ENCODE measurements at regions of chr1 and their contacts with region 1.

Region 1: DNA sequence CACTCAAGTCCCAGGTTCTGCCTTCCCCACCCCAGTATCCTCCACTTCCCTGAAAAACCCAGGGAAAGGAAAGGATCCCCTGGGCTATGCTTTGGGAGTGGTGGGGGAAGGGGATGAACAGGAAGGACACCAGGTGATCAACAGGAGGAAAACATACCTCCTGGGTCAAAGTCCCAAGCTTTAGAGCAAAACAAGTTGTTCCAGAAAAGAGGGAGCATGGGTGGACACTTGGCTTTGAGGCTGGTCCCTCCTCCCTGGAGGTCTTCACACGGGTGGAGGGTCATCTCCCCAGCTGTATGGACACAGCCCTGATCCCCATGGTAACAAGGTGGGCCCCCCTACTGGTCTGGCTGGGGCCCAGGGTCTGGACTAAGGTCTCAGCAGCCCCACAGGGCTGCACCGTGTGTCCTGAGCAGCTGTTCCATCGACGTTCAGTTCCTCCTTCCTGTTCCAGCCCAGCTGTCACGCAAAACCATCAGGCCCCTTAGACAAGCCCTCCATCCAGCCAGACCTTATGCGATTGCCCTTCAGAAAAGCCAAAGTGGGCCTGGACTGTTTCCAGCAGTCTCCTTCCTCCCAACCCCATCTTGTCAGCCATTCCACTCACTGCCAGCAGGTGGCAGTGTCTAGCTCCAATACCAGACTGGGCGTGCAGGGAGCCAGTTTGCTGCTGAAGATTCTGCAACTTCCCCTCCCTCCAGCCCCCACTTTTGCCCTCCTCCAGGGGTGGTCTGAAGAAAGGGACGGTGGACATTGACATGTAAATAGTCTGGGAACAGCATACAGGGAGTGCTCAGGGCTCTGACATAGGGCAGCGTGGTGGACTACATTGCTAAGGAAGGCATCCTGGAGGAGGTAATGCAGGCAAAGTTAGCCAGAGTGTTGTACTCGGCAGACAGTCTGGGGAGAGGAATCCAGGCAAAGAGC is 2.9 kb upstream of the PDZK1IP1 start:
- DNase-seq: peak; percentile 85
- H3K4me3 ChIP-seq: no peak overlapping the region
- H3K27ac ChIP-seq: peak overlapping the region; percentile 73
- H3K4me1 ChIP-seq: peaks cover 23% of the 10 kb centered on the region
- H3K27me3 ChIP-seq: no peaks in the 10 kb centered on the region
- CTCF ChIP-seq: peak; percentile 97

Region 2: GRCh38 chr1:47333922-47334764 is 141.4 kb after region 1 on chr1:
- intact Hi-C with region 1: loop called (anchors 5 kb)
- DNase-seq: peak; percentile 89
- H3K4me3 ChIP-seq: peak overlapping the region; percentile 67
- H3K27ac ChIP-seq: peak overlapping the region; percentile 94
- H3K4me1 ChIP-seq: peaks cover 10% of the 10 kb centered on the region
- H3K27me3 ChIP-seq: no peaks in the 10 kb centered on the region
- CTCF ChIP-seq: no peak

Region 3: DNA sequence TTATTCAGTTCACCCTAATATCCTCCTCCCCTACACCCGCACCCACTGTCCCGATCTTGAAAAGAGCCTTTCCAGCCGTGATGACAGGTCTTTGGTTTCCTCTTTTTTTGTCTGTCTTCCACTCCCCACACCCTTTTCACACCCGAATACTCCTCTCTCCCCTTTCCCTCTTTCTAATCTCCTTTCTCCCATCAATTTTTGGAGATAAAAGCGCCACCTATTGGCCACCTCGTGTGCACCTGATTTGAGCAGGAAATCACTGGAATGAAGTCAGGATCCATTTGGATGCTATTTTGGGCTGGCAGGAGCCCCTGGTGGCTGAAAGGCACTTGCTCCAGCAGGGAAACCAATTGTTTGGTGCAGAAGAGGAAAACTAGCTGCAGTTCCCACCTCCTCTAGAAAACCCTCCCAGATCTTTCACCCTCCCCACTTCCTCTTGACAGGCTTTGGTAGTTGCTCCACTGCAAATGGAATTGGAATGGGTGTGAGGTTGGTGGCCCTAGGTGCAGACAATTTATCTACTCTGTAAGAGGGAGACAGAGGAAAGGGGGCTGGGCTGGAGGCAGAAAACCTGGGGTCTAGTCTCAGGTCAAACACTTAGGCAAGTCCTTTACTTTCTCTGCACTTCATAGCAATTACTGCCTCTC is 231.7 kb after region 1 on chr1:
- intact Hi-C with region 1: loop called (anchors 10 kb)
- DNase-seq: peak; percentile 42
- H3K4me3 ChIP-seq: no peak overlapping the region
- H3K27ac ChIP-seq: no peak overlapping the region
- H3K4me1 ChIP-seq: no peaks in the 10 kb centered on the region
- H3K27me3 ChIP-seq: no peaks in the 10 kb centered on the region
- CTCF ChIP-seq: peak; percentile 64

Region 4: GRCh38 chr1:47547753-47548573 is 355.2 kb after region 1 on chr1:
- intact Hi-C with region 1: no loop called
- DNase-seq: no peak
- H3K4me3 ChIP-seq: no peak overlapping the region
- H3K27ac ChIP-seq: no peak overlapping the region
- H3K4me1 ChIP-seq: no peaks in the 10 kb centered on the region
- H3K27me3 ChIP-seq: no peaks in the 10 kb centered on the region
- CTCF ChIP-seq: no peak

Region 5: DNA sequence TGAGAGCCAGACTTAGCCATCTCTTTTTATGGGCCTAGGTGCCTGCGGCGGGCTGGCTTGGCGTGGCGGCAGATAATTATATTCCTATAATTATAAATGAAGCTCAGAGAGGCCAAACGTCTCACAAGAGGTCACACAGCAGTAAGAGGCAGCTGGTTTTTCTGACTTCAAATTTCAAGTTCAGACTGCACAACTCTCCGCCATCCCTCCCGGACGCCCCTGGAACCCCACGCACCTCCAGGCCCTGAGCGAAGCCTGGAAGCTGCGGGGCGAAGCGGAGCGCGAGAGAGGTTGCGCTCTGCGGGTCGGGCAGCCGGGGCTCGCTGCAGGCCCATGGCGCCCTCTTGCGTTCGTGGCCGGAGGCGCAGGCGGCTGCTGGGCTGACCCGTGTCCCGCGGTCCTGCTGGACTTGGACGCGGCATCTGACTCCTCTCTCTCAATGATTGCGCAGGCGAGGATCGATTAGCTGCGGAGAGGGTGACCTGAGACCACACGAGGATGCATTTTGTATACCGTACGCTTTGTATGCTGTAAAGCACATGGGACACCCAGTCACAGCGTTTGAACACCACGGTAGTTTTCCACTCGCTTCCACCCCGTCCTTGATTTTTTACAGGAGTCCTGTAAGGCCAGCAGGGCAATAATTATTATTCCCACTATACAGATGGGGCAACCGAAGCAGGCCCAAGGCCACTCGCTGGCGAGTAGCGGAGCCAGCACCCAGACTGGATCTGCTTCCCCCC is 517.8 kb after region 1 on chr1:
- intact Hi-C with region 1: loop called (anchors 10 kb)
- DNase-seq: peak; percentile 83
- H3K4me3 ChIP-seq: peak overlapping the region; percentile 41
- H3K27ac ChIP-seq: peak overlapping the region; percentile 60
- H3K4me1 ChIP-seq: no peaks in the 10 kb centered on the region
- H3K27me3 ChIP-seq: peaks cover 9% of the 10 kb centered on the region
- CTCF ChIP-seq: peak; percentile 98